PC-9 (cell line): ENCODE measurements at regions of chr10 and their contacts with region 1.

Region 1: GRCh38 chr10:3467052-3467951 is 294.7 kb upstream of the PITRM1 start:
- DNase-seq: peak; percentile 83 to 96
- H3K4me3 ChIP-seq: peak overlapping the region; percentile 42; the same call in 1 of the 2 replicates
- H3K27ac ChIP-seq: peak overlapping the region; percentile 100
- H3K4me1 ChIP-seq: peaks cover 58% of the 10 kb centered on the region
- H3K27me3 ChIP-seq: no peaks in the 10 kb centered on the region
- CTCF ChIP-seq: peak; percentile 61

Region 2: DNA sequence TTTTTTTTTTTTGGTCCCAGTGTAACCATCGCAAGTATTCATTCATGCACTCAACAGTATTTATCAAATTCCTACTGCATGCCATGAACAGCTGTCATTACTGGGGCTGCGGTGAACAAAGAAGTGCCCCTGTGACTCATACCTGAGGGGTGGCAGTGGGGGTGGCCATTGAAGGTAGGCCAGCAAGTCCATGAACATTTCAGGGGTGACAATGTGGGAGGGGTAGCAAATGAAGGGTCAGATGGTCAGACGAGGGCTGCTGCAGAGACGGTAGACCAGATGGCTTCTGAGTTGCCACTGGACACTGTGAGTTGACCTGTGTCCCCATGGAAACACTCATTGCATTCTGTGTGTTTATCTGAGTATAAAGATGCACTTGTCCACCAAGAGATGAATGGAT is 202.2 kb before region 1 on chr10:
- CTCF ChIA-PET with region 1: no interaction called
- POLR2A ChIA-PET with region 1: no interaction called
- intact Hi-C with region 1: loop called (anchors 1 kb)
- DNase-seq: peak; percentile 53 to 69
- H3K4me3 ChIP-seq: no peak overlapping the region
- H3K27ac ChIP-seq: no peak overlapping the region
- H3K4me1 ChIP-seq: no peaks in the 10 kb centered on the region
- H3K27me3 ChIP-seq: no peaks in the 10 kb centered on the region
- CTCF ChIP-seq: no peak

Region 3: GRCh38 chr10:3502319-3503017 is 35.2 kb after region 1 on chr10:
- CTCF ChIA-PET with region 1: no interaction called
- POLR2A ChIA-PET with region 1: interaction called, 12 read pairs
- intact Hi-C with region 1: loop called (anchors 1 kb)
- DNase-seq: peak; percentile 46 to 47
- H3K4me3 ChIP-seq: no peak overlapping the region
- H3K27ac ChIP-seq: no peak overlapping the region
- H3K4me1 ChIP-seq: 0 out of 2 replicates have a peak, but pooled peaks cover 5% of the 10 kb centered on the region
- H3K27me3 ChIP-seq: no peaks in the 10 kb centered on the region
- CTCF ChIP-seq: no peak

Region 4: GRCh38 chr10:3616880-3617279 is 149.6 kb after region 1 on chr10:
- CTCF ChIA-PET with region 1: no interaction called
- POLR2A ChIA-PET with region 1: no interaction called
- intact Hi-C with region 1: no loop called
- DNase-seq: no peak
- H3K4me3 ChIP-seq: no peak overlapping the region
- H3K27ac ChIP-seq: no peak overlapping the region
- H3K4me1 ChIP-seq: no peaks in the 10 kb centered on the region
- H3K27me3 ChIP-seq: no peaks in the 10 kb centered on the region
- CTCF ChIP-seq: no peak

Region 5: GRCh38 chr10:3636356-3637181 is 169.3 kb after region 1 on chr10:
- CTCF ChIA-PET with region 1: no interaction called
- POLR2A ChIA-PET with region 1: interaction called, 5 read pairs
- intact Hi-C with region 1: loop called (anchors 2 kb)
- DNase-seq: peak; percentile 79 to 86
- H3K4me3 ChIP-seq: peak overlapping the region; percentile 50; the same call in 1 of the 2 replicates
- H3K27ac ChIP-seq: peak overlapping the region; percentile 94
- H3K4me1 ChIP-seq: peaks cover 58% of the 10 kb centered on the region
- H3K27me3 ChIP-seq: no peaks in the 10 kb centered on the region
- CTCF ChIP-seq: no peak

Region 6: DNA sequence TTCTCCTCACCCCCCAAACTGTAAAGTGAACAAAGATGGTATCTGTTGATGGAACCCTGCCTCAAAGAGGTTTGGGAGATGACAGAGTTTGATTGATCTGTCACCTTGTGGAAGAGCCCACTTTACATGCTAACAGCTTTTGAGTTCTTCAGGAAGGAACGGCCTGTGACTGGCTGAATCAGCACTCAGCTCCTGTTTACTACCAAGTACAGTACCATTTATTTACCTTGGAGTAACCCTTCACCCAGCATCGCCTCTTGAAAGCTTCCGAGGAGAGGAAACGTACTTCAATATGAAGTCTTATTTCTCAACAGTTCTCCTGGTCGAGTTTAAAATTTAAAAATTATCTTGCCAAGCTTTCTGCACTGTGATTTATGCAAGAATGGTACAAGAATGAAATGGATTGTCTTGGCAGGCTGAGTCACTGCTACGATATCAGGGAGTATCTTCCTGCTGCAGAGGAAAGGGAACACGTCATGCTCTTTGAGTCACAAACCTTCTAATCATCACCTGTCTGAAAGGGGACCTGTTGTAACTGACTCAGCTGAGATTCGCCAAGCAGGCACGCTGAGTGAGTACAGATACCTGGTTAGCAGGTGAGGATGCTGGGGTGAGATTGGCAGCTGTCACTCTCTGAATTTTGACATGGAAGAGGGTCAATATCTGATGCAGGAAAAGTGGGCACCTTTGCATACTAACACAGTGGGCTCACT is 287.6 kb after region 1 on chr10:
- CTCF ChIA-PET with region 1: no interaction called
- POLR2A ChIA-PET with region 1: no interaction called
- intact Hi-C with region 1: loop called (anchors 1 kb)
- DNase-seq: peak; percentile 68 to 96
- H3K4me3 ChIP-seq: no peak overlapping the region
- H3K27ac ChIP-seq: peak overlapping the region; percentile 92
- H3K4me1 ChIP-seq: peaks cover 55% of the 10 kb centered on the region
- H3K27me3 ChIP-seq: no peaks in the 10 kb centered on the region
- CTCF ChIP-seq: no peak

Region 7: GRCh38 chr10:3852147-3852904 is 385.0 kb after region 1 on chr10:
- CTCF ChIA-PET with region 1: no interaction called
- POLR2A ChIA-PET with region 1: no interaction called
- intact Hi-C with region 1: loop called (anchors 1 kb)
- DNase-seq: peak; percentile 74 to 99
- H3K4me3 ChIP-seq: peak overlapping the region; percentile 16; the same call in 1 of the 2 replicates
- H3K27ac ChIP-seq: peak overlapping the region; percentile 96
- H3K4me1 ChIP-seq: peaks cover 28% of the 10 kb centered on the region
- H3K27me3 ChIP-seq: no peaks in the 10 kb centered on the region
- CTCF ChIP-seq: no peak

Region 8: DNA sequence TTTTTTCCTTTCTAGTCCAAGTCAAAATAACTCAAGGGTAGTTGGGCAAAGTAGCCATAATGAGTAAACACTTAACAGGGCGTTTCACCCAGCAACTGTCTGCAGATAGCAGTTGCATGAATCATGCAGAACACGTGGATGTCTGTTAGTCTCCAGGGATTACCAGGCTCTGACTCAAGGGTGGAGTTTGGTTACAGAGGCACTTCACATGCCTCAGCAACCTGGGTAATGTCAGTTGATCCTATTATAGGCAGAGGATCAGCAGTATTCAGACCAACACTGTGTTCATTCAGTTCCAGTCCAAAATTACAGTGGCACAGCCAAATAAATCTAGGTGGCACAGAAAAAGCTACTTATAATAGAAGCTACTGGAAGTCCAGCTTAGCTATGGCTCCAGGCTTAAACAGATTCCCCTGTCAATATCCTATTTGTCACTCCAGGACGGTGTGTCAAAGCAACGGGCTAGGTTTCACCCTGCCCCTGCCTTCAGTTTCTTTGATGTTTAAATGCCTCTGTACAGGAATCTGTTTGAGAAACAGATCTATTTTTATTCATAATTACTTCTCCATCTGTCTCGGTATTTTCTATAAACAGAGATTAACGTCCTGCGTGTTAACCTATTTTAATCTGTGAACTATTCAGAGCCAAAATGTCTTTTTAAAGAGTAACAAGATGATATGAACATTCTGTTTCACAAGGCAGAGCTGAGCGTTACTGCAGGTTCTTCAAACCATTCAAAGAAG is 1196.0 kb after region 1 on chr10:
- CTCF ChIA-PET with region 1: no interaction called
- POLR2A ChIA-PET with region 1: no interaction called
- intact Hi-C with region 1: loop called (anchors 5 kb)
- DNase-seq: peak; percentile 75 to 94
- H3K4me3 ChIP-seq: peak overlapping the region; percentile 17; the same call in 1 of the 2 replicates
- H3K27ac ChIP-seq: peak overlapping the region; percentile 96
- H3K4me1 ChIP-seq: peaks cover 24% of the 10 kb centered on the region
- H3K27me3 ChIP-seq: no peaks in the 10 kb centered on the region
- CTCF ChIP-seq: no peak